ENCODE measurements at regions of chr16 and their contacts with region 1.

Region 1: DNA sequence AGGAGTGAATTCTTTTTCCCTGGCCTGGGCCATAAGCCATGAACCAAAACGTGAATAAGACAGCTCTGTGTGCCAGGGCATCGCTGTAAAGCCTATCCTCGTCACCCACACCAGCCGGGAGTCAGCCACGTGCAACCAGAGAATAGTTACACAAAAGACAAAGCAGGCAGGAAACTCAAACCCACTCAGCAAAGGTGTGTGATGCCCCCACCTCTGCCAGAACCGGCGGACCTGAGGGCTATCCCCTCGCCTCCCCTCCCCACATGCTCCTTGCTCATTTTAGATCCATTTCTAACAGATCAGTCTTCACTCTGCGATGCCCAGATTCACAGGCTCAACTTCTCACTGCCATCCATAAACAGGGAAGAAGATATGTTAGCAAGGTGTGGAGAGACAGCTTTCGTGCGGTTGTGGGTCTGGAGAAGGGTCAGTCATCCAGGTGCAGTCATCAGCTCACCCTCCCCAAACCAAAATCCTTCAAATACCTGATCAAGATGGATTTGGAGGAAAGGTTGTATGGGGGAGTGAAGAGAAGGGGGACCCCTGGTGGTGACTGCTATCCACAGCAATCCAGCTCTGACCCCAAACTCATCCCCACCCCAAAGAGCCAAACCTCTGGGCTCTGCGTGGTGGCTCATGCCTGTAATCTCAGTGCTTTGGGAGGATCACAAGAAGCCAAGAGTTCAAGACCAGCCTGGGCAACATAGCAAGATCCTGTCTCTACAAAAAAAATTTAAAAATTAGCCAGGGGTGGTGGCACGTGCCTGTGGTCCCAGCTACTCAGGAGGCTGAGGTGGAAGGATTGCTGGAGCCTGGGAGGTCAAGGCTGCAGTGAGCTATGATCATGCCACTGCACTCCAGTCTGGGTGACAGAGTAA is 219.2 kb downstream of the C16orf78 start:
- DNase-seq: peak; percentile 61
- H3K4me3 ChIP-seq: no peak overlapping the region
- H3K27ac ChIP-seq: no peak overlapping the region
- H3K4me1 ChIP-seq: peaks cover 25% of the 10 kb centered on the region
- CTCF ChIP-seq: peak; percentile 89

Region 2: GRCh38 chr16:49407873-49408550 is 184.8 kb before region 1 on chr16:
- CTCF ChIA-PET with region 1: interaction called, 3 read pairs
- POLR2A ChIA-PET with region 1: no interaction called
- intact Hi-C with region 1: loop called (anchors 1 kb)
- DNase-seq: peak; percentile 90
- H3K4me3 ChIP-seq: no peak overlapping the region
- H3K27ac ChIP-seq: no peak overlapping the region
- H3K4me1 ChIP-seq: peaks cover 26% of the 10 kb centered on the region
- CTCF ChIP-seq: peak; percentile 95

Region 3: GRCh38 chr16:49491771-49492761 is 100.7 kb before region 1 on chr16:
- CTCF ChIA-PET with region 1: no interaction called
- POLR2A ChIA-PET with region 1: no interaction called
- intact Hi-C with region 1: loop called (anchors 10 kb)
- DNase-seq: peak; percentile 70
- H3K4me3 ChIP-seq: peak overlapping the region; percentile 26
- H3K27ac ChIP-seq: no peak overlapping the region
- H3K4me1 ChIP-seq: peaks cover 42% of the 10 kb centered on the region
- CTCF ChIP-seq: peak; percentile 91

Region 4: DNA sequence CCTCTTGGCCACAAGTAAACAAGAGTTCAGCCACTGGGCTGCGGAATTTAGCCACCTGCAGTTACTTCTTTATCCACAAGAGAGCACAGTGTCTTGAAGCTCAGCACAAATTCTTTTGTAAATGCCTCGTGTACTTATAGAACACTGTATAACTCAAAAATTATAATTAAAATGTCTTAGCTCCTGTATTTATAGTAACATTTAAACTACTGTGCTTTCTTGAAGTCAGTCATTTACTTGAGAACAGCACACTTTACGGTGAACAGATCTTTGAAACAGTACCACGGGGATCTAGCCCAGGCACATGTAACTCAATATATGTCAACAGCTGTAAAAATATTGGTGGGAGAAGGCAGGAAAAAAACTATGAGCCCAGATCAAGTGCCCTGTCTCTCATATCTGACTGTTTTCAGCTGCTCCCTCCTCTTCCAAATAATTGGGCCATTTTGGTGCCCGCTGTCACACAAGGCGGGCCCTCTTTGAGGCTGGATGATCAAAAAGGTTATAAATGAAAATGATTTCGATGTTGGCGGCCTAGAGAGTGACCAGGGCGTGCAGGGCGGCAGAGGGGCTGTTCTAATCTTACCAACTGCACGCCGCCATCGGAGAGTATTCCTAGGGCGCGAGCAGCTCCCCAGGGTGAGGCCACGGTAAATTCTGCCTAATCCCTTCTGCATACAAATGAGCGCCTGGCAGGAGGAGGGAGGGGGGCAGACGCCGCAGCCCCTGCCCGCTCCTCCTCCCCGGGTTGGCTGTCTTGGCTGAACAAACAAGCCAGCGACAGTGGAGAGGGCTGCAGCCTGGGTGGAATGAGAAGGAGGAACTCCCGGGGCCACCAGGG is 36.0 kb before region 1 on chr16:
- CTCF ChIA-PET with region 1: no interaction called
- POLR2A ChIA-PET with region 1: no interaction called
- intact Hi-C with region 1: loop called (anchors 1 kb)
- DNase-seq: peak; percentile 63
- H3K4me3 ChIP-seq: no peak overlapping the region
- H3K27ac ChIP-seq: no peak overlapping the region
- H3K4me1 ChIP-seq: no peaks in the 10 kb centered on the region
- CTCF ChIP-seq: peak; percentile 83

Region 5: GRCh38 chr16:49937886-49938285 is 345.1 kb after region 1 on chr16:
- CTCF ChIA-PET with region 1: no interaction called
- POLR2A ChIA-PET with region 1: no interaction called
- intact Hi-C with region 1: no loop called
- DNase-seq: no peak
- H3K4me3 ChIP-seq: no peak overlapping the region
- H3K27ac ChIP-seq: no peak overlapping the region
- H3K4me1 ChIP-seq: no peaks in the 10 kb centered on the region
- CTCF ChIP-seq: no peak

Measured in OCI-LY7 (cell line).